ENCODE measurements at regions of chr16 and their contacts with region 1.

Region 1: GRCh38 chr16:24344785-24345184 is 88.7 kb downstream of the CACNG3 start:
- DNase-seq: no peak
- ATAC-seq: no peak
- H3K4me3 ChIP-seq: no peak overlapping the region
- H3K4me3 Mint-ChIP-seq: no peak overlapping the region
- H3K27ac ChIP-seq: no peak overlapping the region
- H3K27ac Mint-ChIP-seq: no peak overlapping the region
- H3K4me1 ChIP-seq: no peaks in the 10 kb centered on the region
- H3K4me1 Mint-ChIP-seq: no peaks in the 10 kb centered on the region
- H3K27me3 ChIP-seq: no peaks in the 10 kb centered on the region
- H3K27me3 Mint-ChIP-seq: peaks cover 28% of the 10 kb centered on the region
- CTCF ChIP-seq: no peak

Region 2: DNA sequence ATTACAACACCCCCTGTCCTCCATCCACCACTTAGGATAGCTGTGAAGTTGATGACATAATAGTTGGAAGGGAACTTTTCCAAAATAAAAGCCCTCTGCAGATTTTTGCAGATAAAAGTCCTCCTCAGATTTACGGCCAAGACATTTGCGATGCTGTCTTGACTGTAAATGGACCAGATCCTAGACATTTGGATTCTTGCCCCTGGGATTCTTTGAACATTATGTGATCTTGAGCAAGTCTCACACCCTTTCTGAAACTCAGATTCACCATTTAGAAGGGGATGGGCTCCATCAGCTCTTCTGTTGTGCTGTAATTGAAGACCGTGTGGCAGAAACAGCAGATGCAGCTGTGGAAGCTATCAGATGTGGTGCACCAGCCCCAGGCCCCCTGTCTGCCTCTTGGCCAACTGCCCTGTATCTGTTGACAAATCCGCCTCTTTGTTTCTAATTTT is 242.6 kb before region 1 on chr16:
- CTCF ChIA-PET with region 1: no interaction called
- POLR2A ChIA-PET with region 1: interaction called, 10 read pairs
- intact Hi-C with region 1: no loop called
- DNase-seq: no peak
- ATAC-seq: no peak
- H3K4me3 ChIP-seq: no peak overlapping the region
- H3K4me3 Mint-ChIP-seq: no peak overlapping the region
- H3K27ac ChIP-seq: no peak overlapping the region
- H3K27ac Mint-ChIP-seq: peak overlapping the region; percentile 22
- H3K4me1 ChIP-seq: no peaks in the 10 kb centered on the region
- H3K4me1 Mint-ChIP-seq: no peaks in the 10 kb centered on the region
- H3K27me3 ChIP-seq: no peaks in the 10 kb centered on the region
- H3K27me3 Mint-ChIP-seq: no peaks in the 10 kb centered on the region
- CTCF ChIP-seq: no peak